HepG2 (cell line): ENCODE measurements at regions of chr16 and their contacts with region 1.

Region 1: GRCh38 chr16:2752035-2752849 is at the start of gene SRRM2:
- DNase-seq: peak; percentile 90
- ATAC-seq: peak; percentile 89
- H3K4me3 ChIP-seq: peak within 1 kb of the TSS; percentile 74 to 93 (median 83)
- H3K27ac ChIP-seq: peak within 1 kb of the TSS; percentile 100
- H3K4me1 ChIP-seq: peaks cover 40% of the 10 kb centered on the region
- H3K27me3 ChIP-seq: no peaks in the 10 kb centered on the region; a peak in 1 of 5 replicates
- CTCF ChIP-seq: peak; percentile 17; the same call in 1 of the 2 replicates
- EP300 ChIP-seq: peak in 1 of 2 experiments; percentile 11; a peak in 1 of 4 replicates
- POLR2A ChIP-seq: peak; percentile 83 to 91
- RAD21 ChIP-seq: peak; percentile 58
- total RNA-seq, gene SRRM2: 50.4 and 80.6 TPM in 2 replicates

Region 2: DNA sequence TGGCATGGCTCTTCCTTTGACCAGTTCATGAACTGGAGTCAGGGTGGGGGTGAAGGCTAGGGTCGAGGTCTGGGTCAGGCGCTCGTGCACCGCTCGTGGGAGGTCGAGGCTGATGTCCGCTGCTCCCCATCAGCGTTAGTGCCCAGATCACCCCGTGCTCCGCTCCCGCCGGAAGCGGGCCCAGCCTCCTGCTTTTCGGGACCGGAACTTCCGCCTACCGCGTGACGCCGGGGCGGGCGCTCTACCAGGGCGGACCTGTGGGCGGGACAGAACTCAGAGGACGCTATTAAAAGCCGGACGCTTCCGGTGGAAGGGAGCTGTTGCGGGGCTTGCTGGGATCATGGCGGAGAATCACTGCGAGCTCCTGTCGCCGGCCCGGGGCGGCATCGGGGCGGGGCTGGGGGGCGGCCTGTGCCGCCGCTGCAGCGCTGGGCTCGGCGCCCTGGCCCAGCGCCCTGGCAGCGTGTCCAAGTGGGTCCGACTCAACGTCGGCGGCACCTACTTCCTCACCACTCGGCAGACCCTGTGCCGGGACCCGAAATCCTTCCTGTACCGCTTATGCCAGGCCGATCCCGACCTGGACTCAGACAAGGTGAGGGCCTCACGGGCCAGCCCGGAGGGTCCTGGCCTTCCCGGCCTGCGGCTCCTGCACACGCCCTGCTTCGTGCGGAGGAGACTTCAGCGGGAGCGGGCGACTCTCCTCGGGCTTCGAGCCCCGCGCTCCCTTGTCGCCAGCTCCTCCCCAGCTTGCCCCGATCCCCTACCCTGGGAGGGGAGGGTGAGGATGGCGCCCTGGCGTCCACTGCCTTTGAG is 69.8 kb before region 1 on chr16 and contains the start of gene KCTD5:
- CTCF ChIA-PET with region 1: no interaction called
- POLR2A ChIA-PET with region 1: interaction called, 12 read pairs
- in situ Hi-C with region 1: no loop called
- intact Hi-C with region 1: no loop called
- DNase-seq: peak; percentile 90
- ATAC-seq: peak; percentile 92
- H3K4me3 ChIP-seq: peak within 1 kb of the TSS; percentile 94 to 100 (median 96)
- H3K27ac ChIP-seq: peak within 1 kb of the TSS; percentile 82
- H3K4me1 ChIP-seq: peaks cover 14% of the 10 kb centered on the region
- H3K27me3 ChIP-seq: no peaks in the 10 kb centered on the region
- CTCF ChIP-seq: peak; percentile 14; the same call in 1 of the 2 replicates
- EP300 ChIP-seq: 0 out of 4 replicates have a peak, but pooled peaks of 1 of the 2 experiments have one; percentile 55
- POLR2A ChIP-seq: peak; percentile 87 to 97
- RAD21 ChIP-seq: 0 out of 2 replicates have a peak, but pooled peaks have one; percentile 27
- total RNA-seq, gene KCTD5: 29.8 and 31.0 TPM in 2 replicates

Region 3: GRCh38 chr16:2739625-2740435 is 12.4 kb before region 1 on chr16:
- CTCF ChIA-PET with region 1: no interaction called
- POLR2A ChIA-PET with region 1: interaction called, 43 read pairs
- in situ Hi-C with region 1: no loop called
- intact Hi-C with region 1: no loop called
- DNase-seq: peak; percentile 45
- ATAC-seq: peak; percentile 78
- H3K4me3 ChIP-seq: peak overlapping the region in 2 of 3 experiments; percentile 35 to 47; a peak in 4 of 6 replicates
- H3K27ac ChIP-seq: no peak overlapping the region
- H3K4me1 ChIP-seq: peaks cover 40% of the 10 kb centered on the region
- H3K27me3 ChIP-seq: no peaks in the 10 kb centered on the region
- CTCF ChIP-seq: no peak
- EP300 ChIP-seq: no peak
- POLR2A ChIP-seq: peak in 1 of 2 experiments; percentile 47; a peak in 1 of 4 replicates
- RAD21 ChIP-seq: no peak

Region 4: GRCh38 chr16:2767891-2768290 is 15.6 kb after region 1 on chr16:
- CTCF ChIA-PET with region 1: no interaction called
- POLR2A ChIA-PET with region 1: interaction called, 15 read pairs
- in situ Hi-C with region 1: no loop called
- intact Hi-C with region 1: no loop called
- DNase-seq: no peak
- ATAC-seq: no peak
- H3K4me3 ChIP-seq: no peak overlapping the region
- H3K27ac ChIP-seq: no peak overlapping the region
- H3K4me1 ChIP-seq: no peaks in the 10 kb centered on the region
- H3K27me3 ChIP-seq: no peaks in the 10 kb centered on the region
- CTCF ChIP-seq: no peak
- EP300 ChIP-seq: no peak
- POLR2A ChIP-seq: no peak
- RAD21 ChIP-seq: no peak

Region 5: DNA sequence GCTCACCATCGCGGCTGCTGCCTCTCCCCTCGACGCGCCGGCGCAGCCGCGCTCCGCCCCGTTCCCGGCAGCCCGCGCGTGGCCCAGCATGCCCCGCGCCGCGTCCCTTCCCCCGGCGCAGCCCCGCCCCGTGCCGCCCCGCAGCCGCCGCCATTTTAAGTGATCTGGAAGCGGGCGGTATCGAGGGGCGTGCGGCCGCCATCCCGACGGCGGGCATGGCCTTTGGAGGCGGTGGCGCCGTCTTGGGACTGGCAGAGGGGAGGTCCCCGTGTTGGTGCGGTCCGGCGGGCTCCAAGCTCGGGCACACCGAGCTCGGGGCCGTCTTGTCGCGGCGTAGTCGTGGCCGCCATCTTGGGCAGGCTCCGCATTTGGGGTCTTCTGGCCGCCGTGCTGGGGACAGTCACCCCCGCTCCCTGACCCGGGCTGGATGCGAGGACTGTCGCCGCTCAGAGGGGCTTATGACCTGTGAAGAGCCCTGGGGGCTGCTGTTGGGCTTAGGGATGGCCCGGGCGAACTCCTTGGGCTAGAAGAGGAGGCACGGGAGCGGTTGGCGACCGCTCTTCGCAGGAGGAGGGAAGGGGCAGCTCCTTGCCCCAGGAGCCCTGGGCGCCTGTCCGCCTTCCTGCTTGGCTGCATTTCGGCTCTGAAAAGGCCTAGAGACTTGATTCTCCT is 25.1 kb after region 1 on chr16 and contains the start of gene ELOB:
- CTCF ChIA-PET with region 1: no interaction called
- POLR2A ChIA-PET with region 1: interaction called, 74 read pairs
- in situ Hi-C with region 1: no loop called
- intact Hi-C with region 1: no loop called
- DNase-seq: peak; percentile 50
- ATAC-seq: peak; percentile 79
- H3K4me3 ChIP-seq: peak within 1 kb of the TSS; percentile 83 to 100 (median 98)
- H3K27ac ChIP-seq: peak within 1 kb of the TSS; percentile 95
- H3K4me1 ChIP-seq: peaks cover 25% of the 10 kb centered on the region
- H3K27me3 ChIP-seq: peaks cover 0 to 2% of the 10 kb centered on the region in 2 experiments; a peak in 3 of 5 replicates
- CTCF ChIP-seq: no peak
- EP300 ChIP-seq: no peak; a peak in 1 of 4 replicates
- POLR2A ChIP-seq: peak; percentile 71 to 80
- RAD21 ChIP-seq: peak; percentile 53; the same call in 1 of the 2 replicates
- total RNA-seq, gene ELOB: 208 and 253 TPM in 2 replicates

Region 6: DNA sequence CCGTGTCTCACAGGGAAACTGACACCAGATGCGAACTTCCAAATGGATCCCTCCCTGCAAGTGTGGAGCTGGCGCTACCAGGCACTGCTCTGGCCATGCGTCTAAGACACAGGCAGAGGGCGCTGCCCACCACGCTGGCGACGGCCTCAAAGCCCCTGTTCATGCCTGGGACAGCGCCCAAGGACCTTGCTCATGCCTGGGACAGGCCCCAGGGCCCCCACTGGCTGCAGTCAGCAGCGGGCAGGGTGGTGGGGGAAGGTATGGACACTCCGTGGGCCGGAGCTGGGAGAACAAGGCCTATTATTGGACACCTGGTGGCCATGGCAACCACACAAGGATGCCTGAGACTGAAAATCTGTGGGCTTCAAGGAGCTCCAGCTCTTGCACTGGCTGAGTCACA is 86.7 kb after region 1 on chr16:
- CTCF ChIA-PET with region 1: no interaction called
- POLR2A ChIA-PET with region 1: no interaction called
- in situ Hi-C with region 1: no loop called
- intact Hi-C with region 1: no loop called
- DNase-seq: peak; percentile 72
- ATAC-seq: peak; percentile 91
- H3K4me3 ChIP-seq: no peak overlapping the region
- H3K27ac ChIP-seq: no peak overlapping the region
- H3K4me1 ChIP-seq: peaks cover 39% of the 10 kb centered on the region
- H3K27me3 ChIP-seq: peaks cover 3 to 4% of the 10 kb centered on the region in 2 experiments; a peak in 2 of 5 replicates
- CTCF ChIP-seq: peak; percentile 99
- EP300 ChIP-seq: no peak
- POLR2A ChIP-seq: no peak
- RAD21 ChIP-seq: peak; percentile 91